CD4-positive, alpha-beta memory T cell (primary cell): ENCODE measurements at regions of chr10 and their contacts with region 1.

Region 1: GRCh38 chr10:58299580-58299979 is 30.6 kb downstream of the CISD1 start:
- DNase-seq: peak; percentile 43 to 58 (median 51)
- H3K4me3 ChIP-seq: no peak overlapping the region
- H3K4me3 Mint-ChIP-seq: no peak overlapping the region
- H3K27ac ChIP-seq: no peak overlapping the region
- H3K27ac Mint-ChIP-seq: no peak overlapping the region
- H3K4me1 ChIP-seq: no peaks in the 10 kb centered on the region
- H3K4me1 Mint-ChIP-seq: peaks cover 0 to 3% (median 0%) of the 10 kb centered on the region in 4 donors
- H3K27me3 ChIP-seq: no peaks in the 10 kb centered on the region
- H3K27me3 Mint-ChIP-seq: peaks cover 4 to 5% of the 10 kb centered on the region in 2 donors

Region 2: DNA sequence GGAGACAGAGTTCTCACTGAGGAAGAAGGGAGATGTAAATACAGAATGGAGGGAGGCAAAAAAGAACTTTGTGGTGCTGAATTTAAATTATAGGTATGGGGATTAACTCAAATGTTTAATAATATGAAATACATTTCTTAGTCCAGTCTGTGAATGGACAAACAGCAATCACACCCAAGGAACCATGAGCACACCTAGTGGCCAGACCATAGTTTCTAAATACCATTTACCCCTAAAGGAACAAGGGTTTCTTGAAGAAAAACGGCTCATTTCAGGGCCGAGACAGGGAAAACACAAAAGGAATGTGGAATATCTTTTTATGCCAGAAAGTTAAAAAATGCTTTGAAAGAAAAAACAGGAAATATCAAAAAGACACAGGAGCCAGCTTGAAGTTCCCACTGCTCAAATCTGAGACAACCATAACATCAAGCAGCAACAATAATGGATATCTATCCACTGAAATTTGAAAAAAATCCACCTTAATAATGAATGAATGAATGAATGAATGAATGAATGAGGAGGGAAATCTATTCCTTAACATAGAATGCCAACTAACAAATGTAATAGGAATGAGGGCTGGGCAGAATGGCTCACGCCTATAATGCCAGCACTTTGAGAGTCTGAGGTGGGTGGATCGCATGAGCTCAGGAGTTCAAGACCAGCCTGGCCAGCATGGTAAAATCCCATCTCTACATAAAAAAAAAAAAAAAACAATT is 40.4 kb before region 1 on chr10:
- CTCF ChIA-PET with region 1: no interaction called
- POLR2A ChIA-PET with region 1: no interaction called
- intact Hi-C with region 1: no loop called
- DNase-seq: no peak
- H3K4me3 ChIP-seq: no peak overlapping the region
- H3K4me3 Mint-ChIP-seq: no peak overlapping the region
- H3K27ac ChIP-seq: no peak overlapping the region
- H3K27ac Mint-ChIP-seq: no peak overlapping the region
- H3K4me1 ChIP-seq: peaks cover under 1% of the 10 kb centered on the region
- H3K4me1 Mint-ChIP-seq: peaks cover 7 to 18% (median 11%) of the 10 kb centered on the region in 4 donors
- H3K27me3 ChIP-seq: no peaks in the 10 kb centered on the region
- H3K27me3 Mint-ChIP-seq: no peaks in the 10 kb centered on the region

Region 3: GRCh38 chr10:58282615-58283014 is 17.0 kb before region 1 on chr10:
- CTCF ChIA-PET with region 1: interaction called, 5 read pairs
- POLR2A ChIA-PET with region 1: no interaction called
- intact Hi-C with region 1: loop called (anchors 1 kb)
- DNase-seq: peak in 4 of 5 donors; percentile 13 to 65 (median 42)
- H3K4me3 ChIP-seq: peak overlapping the region in 1 of 2 donors; percentile 11
- H3K4me3 Mint-ChIP-seq: peak overlapping the region; percentile 21 to 78 (median 46)
- H3K27ac ChIP-seq: peak overlapping the region; percentile 38
- H3K27ac Mint-ChIP-seq: peak overlapping the region; percentile 30 to 95 (median 84)
- H3K4me1 ChIP-seq: peaks cover 13% of the 10 kb centered on the region
- H3K4me1 Mint-ChIP-seq: peaks cover 13 to 21% (median 14%) of the 10 kb centered on the region in 4 donors
- H3K27me3 ChIP-seq: no peaks in the 10 kb centered on the region
- H3K27me3 Mint-ChIP-seq: no peaks in the 10 kb centered on the region

Region 4: DNA sequence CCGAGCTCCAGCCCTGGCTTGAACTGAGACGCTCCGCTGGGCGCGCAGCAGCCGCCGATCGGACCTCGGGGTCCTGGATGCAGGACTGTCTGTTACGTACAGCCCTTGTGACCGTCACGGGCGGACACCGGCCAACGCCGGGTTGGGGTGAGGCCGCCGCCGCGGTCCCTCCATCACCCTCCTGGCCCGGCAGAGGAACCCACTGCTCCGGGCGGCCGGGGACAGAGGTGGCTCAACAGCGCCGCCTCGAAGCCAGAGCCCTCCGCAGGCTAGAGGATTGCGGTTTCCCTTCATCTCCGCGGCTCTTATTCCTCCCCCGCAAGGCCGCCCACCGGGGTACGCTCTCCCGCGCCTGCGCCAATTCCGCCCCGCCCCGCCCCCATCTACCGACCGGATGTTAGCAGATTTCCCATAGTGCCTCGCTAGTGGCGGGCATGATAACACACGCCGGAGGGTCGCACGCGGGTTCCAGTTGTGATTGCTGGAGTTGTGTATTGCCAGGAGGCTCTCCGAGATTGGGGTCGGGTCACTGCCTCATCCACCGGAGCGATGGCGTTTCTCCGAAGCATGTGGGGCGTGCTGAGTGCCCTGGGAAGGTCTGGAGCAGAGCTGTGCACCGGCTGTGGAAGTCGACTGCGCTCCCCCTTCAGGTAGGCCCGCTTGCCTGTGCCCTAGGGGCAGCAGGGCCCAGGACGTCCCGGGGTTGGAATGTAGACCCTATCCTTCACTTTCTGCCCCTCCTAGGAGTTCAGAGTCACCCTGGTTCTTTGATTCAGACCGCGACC is 85.6 kb after region 1 on chr10 and contains the start of gene TFAM:
- CTCF ChIA-PET with region 1: interaction called, 19 read pairs
- POLR2A ChIA-PET with region 1: interaction called, 5 read pairs
- intact Hi-C with region 1: loop called (anchors 1 kb)
- DNase-seq: peak; percentile 92 to 95 (median 93)
- H3K4me3 ChIP-seq: peak within 1 kb of the TSS; percentile 89 to 96
- H3K4me3 Mint-ChIP-seq: peak within 1 kb of the TSS; percentile 90 to 99 (median 98)
- H3K27ac ChIP-seq: peak within 1 kb of the TSS; percentile 74
- H3K27ac Mint-ChIP-seq: peak within 1 kb of the TSS; percentile 92 to 98 (median 96)
- H3K4me1 ChIP-seq: peaks cover 48% of the 10 kb centered on the region
- H3K4me1 Mint-ChIP-seq: peaks cover 28 to 57% (median 39%) of the 10 kb centered on the region in 4 donors
- H3K27me3 ChIP-seq: no peaks in the 10 kb centered on the region
- H3K27me3 Mint-ChIP-seq: peaks cover 0 to 1% of the 10 kb centered on the region in 2 donors
- total RNA-seq, gene TFAM: 45.6 to 52.1 TPM

Region 5: GRCh38 chr10:58531084-58531695 is 231.6 kb after region 1 on chr10:
- CTCF ChIA-PET with region 1: interaction called, 3 read pairs
- POLR2A ChIA-PET with region 1: no interaction called
- intact Hi-C with region 1: loop called (anchors 5 kb)
- DNase-seq: peak; percentile 13 to 40 (median 35)
- H3K4me3 ChIP-seq: no peak overlapping the region
- H3K4me3 Mint-ChIP-seq: no peak overlapping the region
- H3K27ac ChIP-seq: no peak overlapping the region
- H3K27ac Mint-ChIP-seq: no peak overlapping the region
- H3K4me1 ChIP-seq: no peaks in the 10 kb centered on the region
- H3K4me1 Mint-ChIP-seq: no peaks in the 10 kb centered on the region
- H3K27me3 ChIP-seq: no peaks in the 10 kb centered on the region
- H3K27me3 Mint-ChIP-seq: peaks cover 0 to 18% of the 10 kb centered on the region in 2 donors